MCF 10A (cell line): ENCODE measurements at regions of chr2 and their contacts with region 1.

Region 1: GRCh38 chr2:20642055-20642971 is 8.6 kb downstream of the HS1BP3 start:
- DNase-seq: peak; percentile 70
- H3K4me3 Mint-ChIP-seq: no peak overlapping the region
- H3K27ac Mint-ChIP-seq: no peak overlapping the region
- H3K4me1 Mint-ChIP-seq: peaks cover 17% of the 10 kb centered on the region
- H3K27me3 Mint-ChIP-seq: no peaks in the 10 kb centered on the region
- CTCF ChIP-seq: peak; percentile 91

Region 2: GRCh38 chr2:20106746-20107145 is 535.6 kb before region 1 on chr2:
- CTCF ChIA-PET with region 1: interaction called, 3 read pairs
- POLR2A ChIA-PET with region 1: no interaction called
- intact Hi-C with region 1: loop called (anchors 5 kb)
- DNase-seq: peak; percentile 45
- H3K4me3 Mint-ChIP-seq: peak overlapping the region; percentile 68
- H3K27ac Mint-ChIP-seq: peak overlapping the region; percentile 40
- H3K4me1 Mint-ChIP-seq: peaks cover 17% of the 10 kb centered on the region
- H3K27me3 Mint-ChIP-seq: no peaks in the 10 kb centered on the region
- CTCF ChIP-seq: peak; percentile 40

Region 3: GRCh38 chr2:20398956-20399567 is 243.3 kb before region 1 on chr2:
- CTCF ChIA-PET with region 1: interaction called, 78 read pairs
- POLR2A ChIA-PET with region 1: no interaction called
- intact Hi-C with region 1: loop called (anchors 1 kb)
- DNase-seq: no peak
- H3K4me3 Mint-ChIP-seq: no peak overlapping the region
- H3K27ac Mint-ChIP-seq: no peak overlapping the region
- H3K4me1 Mint-ChIP-seq: peaks cover 25% of the 10 kb centered on the region
- H3K27me3 Mint-ChIP-seq: no peaks in the 10 kb centered on the region
- CTCF ChIP-seq: no peak

Region 4: DNA sequence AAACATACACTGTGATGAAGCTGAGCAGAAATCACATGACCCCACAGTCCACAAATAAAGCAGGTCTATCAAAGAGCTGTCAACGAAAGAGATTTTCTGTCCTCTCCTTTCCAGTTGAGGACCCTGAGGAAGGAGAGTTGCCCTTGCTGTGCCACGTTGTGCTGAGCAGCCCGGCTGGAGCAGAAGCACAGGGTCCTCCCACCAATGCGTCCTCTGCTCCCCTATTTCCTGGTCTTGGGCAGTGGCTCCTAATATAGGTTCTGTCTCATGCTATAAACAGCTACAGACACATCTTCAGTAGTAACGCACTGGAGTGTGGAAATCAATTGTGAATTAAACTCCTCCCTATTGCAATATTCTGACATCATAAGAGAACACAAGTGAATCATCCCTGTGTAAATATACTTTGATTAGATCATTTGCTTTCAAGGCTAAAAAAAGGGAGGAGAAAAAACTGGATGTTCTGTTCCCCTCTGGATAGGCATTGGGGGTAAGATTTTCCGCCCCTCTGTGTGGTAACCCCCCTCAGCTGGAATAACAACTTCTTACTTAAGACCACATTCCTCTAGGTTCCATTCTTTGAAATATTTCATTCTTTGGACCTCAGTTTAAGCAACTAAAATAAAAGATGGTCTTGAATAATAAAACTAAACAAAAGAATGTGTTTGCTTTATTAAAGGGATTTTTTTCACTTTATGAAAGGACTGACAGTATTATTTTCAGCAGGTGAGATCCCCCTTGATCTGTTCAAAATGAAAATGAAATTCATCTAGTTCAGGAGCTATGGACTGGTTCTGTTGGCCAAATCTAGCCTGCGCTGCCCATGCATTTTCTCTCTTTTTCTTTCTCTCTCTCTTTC is 203.8 kb before region 1 on chr2:
- CTCF ChIA-PET with region 1: interaction called, 98 read pairs
- POLR2A ChIA-PET with region 1: interaction called, 20 read pairs
- intact Hi-C with region 1: no loop called
- DNase-seq: peak; percentile 89
- H3K4me3 Mint-ChIP-seq: peak overlapping the region; percentile 66
- H3K27ac Mint-ChIP-seq: peak overlapping the region; percentile 82
- H3K4me1 Mint-ChIP-seq: peaks cover 26% of the 10 kb centered on the region
- H3K27me3 Mint-ChIP-seq: no peaks in the 10 kb centered on the region
- CTCF ChIP-seq: no peak

Region 5: GRCh38 chr2:20625491-20626391 is 16.6 kb before region 1 on chr2:
- CTCF ChIA-PET with region 1: interaction called, 18 read pairs
- POLR2A ChIA-PET with region 1: no interaction called
- intact Hi-C with region 1: no loop called
- DNase-seq: no peak
- H3K4me3 Mint-ChIP-seq: no peak overlapping the region
- H3K27ac Mint-ChIP-seq: no peak overlapping the region
- H3K4me1 Mint-ChIP-seq: peaks cover 4% of the 10 kb centered on the region
- H3K27me3 Mint-ChIP-seq: no peaks in the 10 kb centered on the region
- CTCF ChIP-seq: no peak

Region 6: GRCh38 chr2:21404827-21405625 is 762.7 kb after region 1 on chr2:
- CTCF ChIA-PET with region 1: no interaction called
- POLR2A ChIA-PET with region 1: no interaction called
- intact Hi-C with region 1: no loop called
- DNase-seq: peak; percentile 6
- H3K4me3 Mint-ChIP-seq: no peak overlapping the region
- H3K27ac Mint-ChIP-seq: no peak overlapping the region
- H3K4me1 Mint-ChIP-seq: no peaks in the 10 kb centered on the region
- H3K27me3 Mint-ChIP-seq: peaks cover 8% of the 10 kb centered on the region
- CTCF ChIP-seq: no peak